ENCODE measurements at regions of chr17 and their contacts with region 1.

Region 1: DNA sequence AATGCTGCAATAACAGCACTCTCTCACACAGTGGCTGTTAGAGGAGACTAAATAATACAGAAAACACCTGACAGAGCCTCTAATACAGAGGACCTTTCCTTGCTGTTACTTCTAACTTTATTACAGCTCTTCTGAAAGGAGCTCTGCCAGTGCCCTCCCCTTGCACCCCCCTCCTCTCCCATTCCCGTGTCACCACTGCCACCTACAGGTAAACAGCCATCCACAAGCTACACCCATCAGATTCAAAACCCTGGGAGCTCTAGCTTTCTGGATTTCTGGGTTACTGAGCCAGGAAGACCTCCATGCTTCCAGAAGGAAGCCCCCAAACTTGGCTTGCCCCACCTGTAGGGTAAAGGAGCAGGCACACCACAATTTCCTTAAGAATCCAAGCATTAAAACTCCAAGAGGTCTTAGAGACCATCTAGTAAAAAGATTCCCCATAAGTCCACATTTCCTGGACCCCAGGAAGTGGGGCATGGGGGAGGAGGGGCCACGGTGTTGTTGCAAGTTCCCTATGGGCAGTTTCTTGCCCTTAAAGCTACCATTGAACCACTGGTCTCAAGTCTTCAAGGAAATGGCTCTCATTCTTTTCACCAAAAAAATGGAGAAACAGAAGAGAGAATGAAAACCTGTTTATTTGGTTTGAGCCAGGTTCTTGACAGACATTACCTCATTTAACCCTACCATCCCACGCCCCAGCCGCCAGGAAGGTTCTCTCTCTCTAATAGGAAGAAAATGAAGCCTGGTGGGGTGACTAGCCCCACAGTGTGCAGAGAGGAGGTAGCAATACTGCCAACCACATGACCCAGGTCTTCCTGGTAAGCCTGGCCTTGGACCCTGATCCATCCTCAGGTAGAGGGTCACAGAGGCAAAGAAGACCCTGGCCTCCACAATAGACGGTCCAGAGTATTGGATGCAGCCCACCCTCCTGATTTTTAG is 52.8 kb downstream of the TOM1L2 start:
- DNase-seq: peak; percentile 61
- H3K4me3 ChIP-seq: no peak overlapping the region
- H3K27ac ChIP-seq: peak overlapping the region; percentile 84
- H3K4me1 ChIP-seq: peaks cover 59% of the 10 kb centered on the region
- H3K27me3 ChIP-seq: no peaks in the 10 kb centered on the region
- CTCF ChIP-seq: peak; percentile 88 to 94

Region 2: DNA sequence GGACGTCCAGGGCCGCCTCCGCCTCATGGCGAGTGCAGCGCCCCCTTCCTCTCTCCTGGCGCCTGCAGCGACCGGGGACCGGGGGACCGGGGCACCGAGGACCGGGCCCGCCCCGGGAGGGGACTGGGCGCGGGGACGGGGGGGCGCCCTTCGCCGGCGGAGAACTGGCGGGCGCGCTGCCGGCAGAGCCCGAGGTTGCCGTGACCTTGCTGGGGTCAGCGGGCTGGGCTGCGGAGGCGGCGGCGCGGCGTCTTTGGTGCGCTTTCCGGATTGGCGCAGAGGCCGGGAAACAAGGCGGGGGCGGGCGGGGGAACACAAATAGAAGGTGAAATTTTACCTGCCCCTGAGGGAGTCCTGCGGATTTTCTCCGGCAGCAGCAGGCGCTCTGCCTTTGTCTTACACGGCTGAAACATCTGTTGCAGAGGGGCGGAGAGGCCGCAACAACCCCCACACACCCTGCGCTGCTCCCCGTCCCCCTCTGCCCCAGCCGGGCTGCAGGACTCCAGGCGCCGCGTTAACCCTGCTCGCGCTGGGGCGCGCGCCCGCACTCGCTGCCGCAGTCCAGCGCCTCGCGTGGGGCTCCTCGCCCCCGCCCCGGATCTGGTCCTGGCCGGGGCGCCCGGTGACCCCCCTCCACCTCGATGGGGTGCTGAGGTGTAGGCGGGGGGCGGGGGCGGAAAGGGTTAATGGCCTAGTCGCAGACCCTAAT is 136.2 kb before region 1 on chr17:
- CTCF ChIA-PET with region 1: no interaction called
- dilution Hi-C with region 1: no loop called
- in situ Hi-C with region 1: no loop called
- intact Hi-C with region 1: loop called (anchors 1 kb)
- DNase-seq: peak; percentile 50
- H3K4me3 ChIP-seq: peak overlapping the region in 2 of 3 experiments; percentile 30 to 44
- H3K27ac ChIP-seq: no peak overlapping the region
- H3K4me1 ChIP-seq: peaks cover 48% of the 10 kb centered on the region
- H3K27me3 ChIP-seq: no peaks in the 10 kb centered on the region
- CTCF ChIP-seq: peak in 1 of 2 donors; percentile 24

Region 3: GRCh38 chr17:17859909-17860765 is 59.3 kb before region 1 on chr17:
- CTCF ChIA-PET with region 1: no interaction called
- dilution Hi-C with region 1: no loop called
- in situ Hi-C with region 1: no loop called
- intact Hi-C with region 1: loop called (anchors 1 kb)
- DNase-seq: peak; percentile 43
- H3K4me3 ChIP-seq: no peak overlapping the region
- H3K27ac ChIP-seq: no peak overlapping the region
- H3K4me1 ChIP-seq: peaks cover 21% of the 10 kb centered on the region
- H3K27me3 ChIP-seq: no peaks in the 10 kb centered on the region
- CTCF ChIP-seq: peak; percentile 94 to 98

Region 4: DNA sequence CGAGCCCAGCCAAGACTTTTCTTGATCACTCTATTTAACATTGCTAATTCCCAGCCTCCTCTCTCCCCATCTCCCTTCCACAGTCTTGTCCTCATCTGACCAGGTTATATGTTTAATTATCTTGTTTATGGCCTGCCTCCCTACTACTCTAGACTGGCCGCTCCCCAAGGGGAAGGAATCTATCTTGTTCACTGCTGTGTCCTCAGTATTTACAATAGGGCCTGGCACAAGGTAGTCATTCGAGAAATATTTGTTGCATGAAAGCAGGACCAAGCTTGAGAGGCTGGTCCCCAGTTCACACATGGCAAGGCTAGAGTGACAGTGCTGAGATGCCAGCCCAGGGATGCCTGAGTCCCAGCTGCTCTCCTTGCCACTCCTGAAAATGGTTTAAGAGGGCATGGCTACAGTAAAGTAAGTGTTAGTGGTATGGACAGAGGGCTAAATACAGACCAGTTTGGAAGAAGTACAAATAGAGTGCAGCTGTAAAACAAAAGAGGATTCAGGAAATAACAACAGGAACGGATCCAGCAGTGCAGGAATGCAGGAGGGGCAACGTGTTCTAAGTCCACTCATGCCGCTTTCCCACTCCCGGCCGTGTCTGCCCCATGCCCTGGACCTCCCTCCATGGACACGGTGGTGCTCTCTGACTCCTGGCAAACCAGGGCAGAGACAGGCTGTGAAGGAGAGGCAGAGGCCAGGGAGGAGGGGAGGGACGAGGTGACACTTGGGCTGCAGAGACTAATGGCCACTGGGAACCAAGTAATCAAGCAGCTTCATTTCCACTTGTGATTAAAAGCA is 12.8 kb before region 1 on chr17:
- CTCF ChIA-PET with region 1: interaction called, 11 read pairs
- dilution Hi-C with region 1: no loop called
- in situ Hi-C with region 1: no loop called
- intact Hi-C with region 1: no loop called
- DNase-seq: no peak
- H3K4me3 ChIP-seq: no peak overlapping the region
- H3K27ac ChIP-seq: no peak overlapping the region
- H3K4me1 ChIP-seq: peaks cover 9% of the 10 kb centered on the region
- H3K27me3 ChIP-seq: no peaks in the 10 kb centered on the region
- CTCF ChIP-seq: no peak

Region 5: DNA sequence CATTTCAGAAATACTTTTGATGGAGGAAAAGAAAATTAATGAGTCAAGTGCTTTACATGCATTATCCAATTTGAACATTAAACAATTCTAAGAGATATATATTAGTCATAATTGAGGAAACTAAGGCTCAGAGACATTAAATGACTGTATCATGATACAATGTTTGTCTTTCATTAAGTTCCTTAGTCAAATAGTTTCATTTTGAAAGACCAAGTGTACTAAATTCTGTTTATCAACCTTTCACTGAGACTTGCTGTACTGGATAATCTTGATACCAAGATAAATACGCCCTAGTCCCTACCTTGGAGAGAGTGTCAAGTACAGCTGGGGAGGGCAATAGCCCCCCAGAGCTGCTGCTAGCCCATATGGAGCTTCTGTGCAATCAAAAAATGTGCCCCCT is 28.5 kb after region 1 on chr17:
- CTCF ChIA-PET with region 1: no interaction called
- dilution Hi-C with region 1: no loop called
- in situ Hi-C with region 1: no loop called
- intact Hi-C with region 1: no loop called
- DNase-seq: peak; percentile 61
- H3K4me3 ChIP-seq: no peak overlapping the region
- H3K27ac ChIP-seq: no peak overlapping the region
- H3K4me1 ChIP-seq: peaks cover 43% of the 10 kb centered on the region
- H3K27me3 ChIP-seq: no peaks in the 10 kb centered on the region
- CTCF ChIP-seq: no peak

Region 6: GRCh38 chr17:17959520-17960361 is 40.3 kb after region 1 on chr17:
- CTCF ChIA-PET with region 1: interaction called, 9 read pairs
- dilution Hi-C with region 1: no loop called
- in situ Hi-C with region 1: no loop called
- intact Hi-C with region 1: loop called (anchors 5 kb)
- DNase-seq: no peak
- H3K4me3 ChIP-seq: no peak overlapping the region
- H3K27ac ChIP-seq: peak overlapping the region; percentile 97
- H3K4me1 ChIP-seq: peaks cover 32% of the 10 kb centered on the region
- H3K27me3 ChIP-seq: no peaks in the 10 kb centered on the region
- CTCF ChIP-seq: no peak

Region 7: GRCh38 chr17:18033442-18034099 is 114.1 kb after region 1 on chr17:
- CTCF ChIA-PET with region 1: no interaction called
- dilution Hi-C with region 1: no loop called
- in situ Hi-C with region 1: no loop called
- intact Hi-C with region 1: loop called (anchors 1 kb)
- DNase-seq: peak; percentile 74
- H3K4me3 ChIP-seq: no peak overlapping the region
- H3K27ac ChIP-seq: no peak overlapping the region
- H3K4me1 ChIP-seq: peaks cover 25% of the 10 kb centered on the region
- H3K27me3 ChIP-seq: no peaks in the 10 kb centered on the region
- CTCF ChIP-seq: peak; percentile 55 to 60

Region 8: GRCh38 chr17:18213666-18214270 is 294.3 kb after region 1 on chr17:
- CTCF ChIA-PET with region 1: no interaction called
- dilution Hi-C with region 1: no loop called
- in situ Hi-C with region 1: no loop called
- intact Hi-C with region 1: no loop called
- DNase-seq: no peak
- H3K4me3 ChIP-seq: no peak overlapping the region
- H3K27ac ChIP-seq: no peak overlapping the region
- H3K4me1 ChIP-seq: no peaks in the 10 kb centered on the region
- H3K27me3 ChIP-seq: no peaks in the 10 kb centered on the region
- CTCF ChIP-seq: no peak